OCI-LY7 (cell line): ENCODE measurements at regions of chr9 and their contacts with region 1.

Region 1: DNA sequence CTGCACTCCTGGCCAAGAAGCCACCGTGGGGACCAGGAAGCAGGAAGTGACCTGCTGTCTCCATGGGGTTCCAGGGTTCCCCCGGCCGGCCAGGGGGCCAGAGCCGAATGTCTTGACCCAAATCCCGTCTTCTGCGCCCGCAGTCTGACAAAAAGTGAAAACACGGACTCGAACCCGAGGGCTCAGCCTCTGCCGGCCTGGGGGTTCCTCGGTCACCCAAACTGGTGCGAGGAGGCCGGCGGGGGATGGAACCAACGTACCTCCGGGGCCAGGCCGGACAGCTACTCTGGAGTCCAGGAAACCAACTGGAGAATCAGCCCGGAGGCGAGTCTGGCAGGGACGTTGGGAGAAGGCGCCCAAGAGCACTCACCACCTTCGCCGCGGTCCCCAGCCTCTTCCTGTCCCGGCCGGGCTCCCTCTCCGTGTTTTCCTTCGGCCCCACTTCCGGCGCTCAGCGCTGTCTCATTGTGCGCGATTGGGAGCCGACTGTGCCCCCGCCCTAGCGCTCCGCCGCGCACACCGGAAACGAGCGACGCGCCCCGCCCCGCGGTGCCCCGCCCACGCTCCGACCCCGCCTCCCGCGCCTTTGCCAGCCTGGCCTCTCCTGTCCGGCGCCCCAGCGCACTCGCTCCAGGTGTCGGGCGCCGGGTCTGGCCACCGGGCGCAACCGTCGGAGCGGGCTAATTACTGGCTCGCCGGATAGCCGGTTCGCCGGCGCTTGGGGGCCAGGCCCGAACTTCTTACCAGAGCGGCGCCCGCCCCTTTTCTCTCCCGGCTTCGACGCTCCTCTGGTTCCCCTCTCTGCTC is at the start of gene TUT7:
- DNase-seq: peak; percentile 96
- H3K4me3 ChIP-seq: peak within 1 kb of the TSS; percentile 92
- H3K27ac ChIP-seq: peak within 1 kb of the TSS; percentile 81
- H3K4me1 ChIP-seq: peaks cover 30% of the 10 kb centered on the region
- CTCF ChIP-seq: no peak
- total RNA-seq, gene TUT7: 29.2 and 44.4 TPM in 2 replicates

Region 2: GRCh38 chr9:85741875-85742629 is 612.2 kb before region 1 on chr9 and contains the start of gene AGTPBP1:
- CTCF ChIA-PET with region 1: no interaction called
- POLR2A ChIA-PET with region 1: no interaction called
- intact Hi-C with region 1: loop called (anchors 5 kb)
- DNase-seq: peak; percentile 97
- H3K4me3 ChIP-seq: peak within 1 kb of the TSS; percentile 92
- H3K27ac ChIP-seq: peak within 1 kb of the TSS; percentile 70
- H3K4me1 ChIP-seq: peaks cover 10% of the 10 kb centered on the region
- CTCF ChIP-seq: no peak
- total RNA-seq, gene AGTPBP1: 24.2 and 31.0 TPM in 2 replicates

Region 3: DNA sequence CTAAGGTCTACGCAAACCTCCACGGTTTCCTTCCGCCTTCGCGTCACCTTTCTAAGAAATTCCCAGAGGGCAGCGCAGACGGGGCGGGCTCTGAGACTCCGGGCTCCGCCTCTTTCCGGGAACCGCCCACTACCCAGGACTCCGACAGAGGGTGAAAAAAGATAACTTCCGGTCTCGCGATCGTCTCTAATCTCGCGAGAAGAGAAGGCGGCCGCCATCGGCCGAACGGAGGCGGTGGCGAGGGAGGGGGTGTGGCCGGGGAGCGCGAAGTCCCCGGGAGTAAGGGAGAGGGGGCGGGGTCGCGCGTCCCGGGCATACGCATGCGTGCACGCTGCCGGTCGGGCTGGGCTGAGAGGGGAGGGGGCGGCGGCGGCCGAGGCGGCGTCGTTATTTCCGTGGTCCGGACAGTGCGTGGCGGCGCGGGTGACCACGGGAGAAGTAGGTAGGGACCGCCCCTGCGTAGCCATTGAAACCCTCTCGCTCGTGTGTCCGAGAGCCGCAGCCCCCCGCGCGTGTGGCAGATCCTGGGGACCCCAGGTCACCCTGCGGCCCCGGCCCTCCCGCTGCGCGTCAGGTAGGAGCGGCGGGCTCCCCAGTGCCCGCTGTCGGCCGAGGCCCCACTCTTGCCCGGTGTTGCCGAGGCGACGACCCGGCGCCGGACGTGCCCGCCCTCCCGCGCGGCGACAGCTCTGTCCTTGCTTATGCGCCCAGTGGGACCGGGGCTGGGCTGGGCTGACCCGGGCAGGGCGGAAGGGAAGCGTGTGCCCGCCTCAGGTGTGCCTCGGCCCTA is 413.2 kb before region 1 on chr9 and contains the start of gene NAA35:
- CTCF ChIA-PET with region 1: no interaction called
- POLR2A ChIA-PET with region 1: no interaction called
- intact Hi-C with region 1: loop called (anchors 5 kb)
- DNase-seq: peak; percentile 99
- H3K4me3 ChIP-seq: peak within 1 kb of the TSS; percentile 98
- H3K27ac ChIP-seq: peak within 1 kb of the TSS; percentile 35
- H3K4me1 ChIP-seq: peaks cover 25% of the 10 kb centered on the region
- CTCF ChIP-seq: no peak
- total RNA-seq, gene NAA35: 9.5 and 14.1 TPM in 2 replicates

Region 4: DNA sequence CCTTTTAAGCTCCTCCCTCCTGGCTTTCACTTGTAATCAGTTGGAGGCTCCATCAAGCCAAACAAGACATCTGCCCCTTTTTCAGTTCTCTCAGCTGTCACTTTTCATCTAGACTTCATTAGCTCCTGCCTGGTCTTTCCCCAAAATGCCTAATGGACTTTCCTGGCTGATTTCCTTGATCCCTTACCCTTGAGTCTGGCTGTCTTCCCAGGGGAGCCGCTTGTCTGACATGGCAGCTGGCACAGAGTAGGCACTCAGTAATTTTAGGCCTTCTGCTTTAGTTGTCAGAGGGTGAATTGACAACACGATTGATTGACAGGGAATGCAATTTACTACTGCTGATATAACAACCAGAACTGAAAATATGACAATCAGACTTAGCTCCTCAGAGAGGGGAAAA is 96.8 kb before region 1 on chr9:
- CTCF ChIA-PET with region 1: no interaction called
- POLR2A ChIA-PET with region 1: no interaction called
- intact Hi-C with region 1: no loop called
- DNase-seq: no peak
- H3K4me3 ChIP-seq: no peak overlapping the region
- H3K27ac ChIP-seq: no peak overlapping the region
- H3K4me1 ChIP-seq: no peaks in the 10 kb centered on the region
- CTCF ChIP-seq: no peak

Region 5: GRCh38 chr9:86282077-86282978 is 71.9 kb before region 1 on chr9 and contains the start of gene ISCA1:
- CTCF ChIA-PET with region 1: no interaction called
- POLR2A ChIA-PET with region 1: interaction called, 5 read pairs
- intact Hi-C with region 1: loop called (anchors 2 kb)
- DNase-seq: peak; percentile 95
- H3K4me3 ChIP-seq: peak within 1 kb of the TSS; percentile 89
- H3K27ac ChIP-seq: peak within 1 kb of the TSS; percentile 76
- H3K4me1 ChIP-seq: peaks cover 33% of the 10 kb centered on the region
- CTCF ChIP-seq: no peak
- total RNA-seq, gene ISCA1: 20.6 and 21.8 TPM in 2 replicates

Region 6: GRCh38 chr9:86337469-86338108 is 16.6 kb before region 1 on chr9:
- CTCF ChIA-PET with region 1: interaction called, 4 read pairs
- POLR2A ChIA-PET with region 1: interaction called, 27 read pairs
- intact Hi-C with region 1: loop called (anchors 1 kb)
- DNase-seq: peak; percentile 36
- H3K4me3 ChIP-seq: peak overlapping the region; percentile 56
- H3K27ac ChIP-seq: peak overlapping the region; percentile 55
- H3K4me1 ChIP-seq: peaks cover 34% of the 10 kb centered on the region
- CTCF ChIP-seq: no peak

Region 7: GRCh38 chr9:86405926-86406325 is 51.7 kb after region 1 on chr9:
- CTCF ChIA-PET with region 1: no interaction called
- POLR2A ChIA-PET with region 1: no interaction called
- intact Hi-C with region 1: no loop called
- DNase-seq: no peak
- H3K4me3 ChIP-seq: no peak overlapping the region
- H3K27ac ChIP-seq: no peak overlapping the region
- H3K4me1 ChIP-seq: no peaks in the 10 kb centered on the region
- CTCF ChIP-seq: no peak